Caco-2 (cell line): ENCODE measurements at regions of chr11 and their contacts with region 1.

Region 1: DNA sequence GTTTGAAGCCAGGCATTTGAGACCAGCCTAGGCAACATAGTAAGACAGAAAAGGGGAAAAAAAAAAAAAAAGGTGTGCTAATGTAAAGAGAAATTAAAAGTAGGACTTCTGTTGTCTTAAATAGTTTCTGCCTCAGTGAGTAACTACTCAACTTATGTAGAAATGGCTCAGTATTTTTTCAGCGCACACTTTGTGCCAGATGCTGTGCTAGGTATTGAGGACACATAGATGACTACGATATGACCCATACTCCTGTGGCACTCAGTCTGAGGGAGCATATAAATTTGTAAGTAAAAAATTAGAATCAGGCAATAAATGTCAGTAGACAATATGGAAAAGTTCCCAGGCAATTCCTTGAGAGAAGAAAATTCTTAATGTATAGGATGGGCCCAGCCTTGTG is 93.9 kb downstream of the YAP1 start:
- DNase-seq: no peak
- H3K4me3 ChIP-seq: no peak overlapping the region
- H3K4me3 Mint-ChIP-seq: no peak overlapping the region
- H3K27ac Mint-ChIP-seq: peak overlapping the region; percentile 12
- H3K4me1 ChIP-seq: peaks cover 8% of the 10 kb centered on the region; the same call in 1 of the 2 replicates
- H3K4me1 Mint-ChIP-seq: peaks cover 35% of the 10 kb centered on the region
- H3K27me3 ChIP-seq: no peaks in the 10 kb centered on the region
- H3K27me3 Mint-ChIP-seq: no peaks in the 10 kb centered on the region
- CTCF ChIP-seq: no peak

Region 2: GRCh38 chr11:102171101-102171500 is 33.1 kb before region 1 on chr11:
- CTCF ChIA-PET with region 1: no interaction called
- POLR2A ChIA-PET with region 1: no interaction called
- intact Hi-C with region 1: no loop called
- DNase-seq: no peak
- H3K4me3 ChIP-seq: no peak overlapping the region
- H3K4me3 Mint-ChIP-seq: no peak overlapping the region
- H3K27ac Mint-ChIP-seq: no peak overlapping the region
- H3K4me1 ChIP-seq: peaks cover 17% of the 10 kb centered on the region
- H3K4me1 Mint-ChIP-seq: peaks cover 24% of the 10 kb centered on the region
- H3K27me3 ChIP-seq: no peaks in the 10 kb centered on the region
- H3K27me3 Mint-ChIP-seq: no peaks in the 10 kb centered on the region
- CTCF ChIP-seq: no peak

Region 3: DNA sequence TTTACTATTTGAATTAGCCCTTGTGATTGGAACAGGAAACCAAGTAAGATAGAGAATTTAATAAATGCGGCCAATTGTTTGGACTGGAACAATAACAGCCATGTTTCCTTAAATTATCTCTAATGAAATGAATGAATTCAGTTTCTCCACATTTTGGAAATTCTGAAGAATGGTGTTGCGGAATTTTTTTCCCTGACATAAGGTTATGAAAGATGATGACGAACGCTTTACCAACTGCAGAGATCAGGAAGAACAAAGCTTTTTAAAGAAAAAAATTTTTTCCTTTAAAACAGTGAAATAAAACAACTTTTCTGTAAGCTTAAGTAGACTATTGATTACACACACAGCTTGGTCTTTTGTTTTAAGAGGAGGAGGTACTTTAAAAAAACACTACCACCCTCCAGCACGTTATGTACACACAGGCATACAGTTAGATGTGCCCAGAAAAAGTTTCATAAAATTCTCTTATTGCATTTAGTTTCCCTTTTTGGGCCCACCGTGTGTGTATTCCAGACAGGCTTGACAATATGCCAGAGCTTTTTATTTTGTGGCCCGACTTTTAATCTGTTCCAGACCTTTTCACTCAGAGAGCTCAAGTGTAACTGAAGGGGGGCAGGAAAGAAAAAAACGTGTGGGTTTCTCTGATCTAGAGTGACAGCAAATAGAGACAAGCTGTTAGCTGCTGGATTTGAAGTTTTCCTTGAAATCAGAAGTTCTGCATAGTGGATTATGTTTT is 16.6 kb before region 1 on chr11:
- CTCF ChIA-PET with region 1: no interaction called
- POLR2A ChIA-PET with region 1: no interaction called
- intact Hi-C with region 1: no loop called
- DNase-seq: no peak
- H3K4me3 ChIP-seq: no peak overlapping the region
- H3K4me3 Mint-ChIP-seq: peak overlapping the region; percentile 64
- H3K27ac Mint-ChIP-seq: peak overlapping the region; percentile 54
- H3K4me1 ChIP-seq: peaks cover 83% of the 10 kb centered on the region
- H3K4me1 Mint-ChIP-seq: peaks cover 58% of the 10 kb centered on the region
- H3K27me3 ChIP-seq: no peaks in the 10 kb centered on the region
- H3K27me3 Mint-ChIP-seq: no peaks in the 10 kb centered on the region
- CTCF ChIP-seq: no peak

Region 4: GRCh38 chr11:102216433-102217075 is 12.4 kb after region 1 on chr11:
- CTCF ChIA-PET with region 1: no interaction called
- POLR2A ChIA-PET with region 1: no interaction called
- intact Hi-C with region 1: loop called (anchors 1 kb)
- DNase-seq: no peak
- H3K4me3 ChIP-seq: no peak overlapping the region
- H3K4me3 Mint-ChIP-seq: no peak overlapping the region
- H3K27ac Mint-ChIP-seq: no peak overlapping the region
- H3K4me1 ChIP-seq: no peaks in the 10 kb centered on the region
- H3K4me1 Mint-ChIP-seq: peaks cover 22% of the 10 kb centered on the region
- H3K27me3 ChIP-seq: no peaks in the 10 kb centered on the region
- H3K27me3 Mint-ChIP-seq: no peaks in the 10 kb centered on the region
- CTCF ChIP-seq: no peak

Region 5: GRCh38 chr11:102451681-102452460 is 247.7 kb after region 1 on chr11:
- CTCF ChIA-PET with region 1: no interaction called
- POLR2A ChIA-PET with region 1: no interaction called
- intact Hi-C with region 1: no loop called
- DNase-seq: peak; percentile 81 to 87
- H3K4me3 ChIP-seq: peak overlapping the region; percentile 90
- H3K4me3 Mint-ChIP-seq: peak overlapping the region; percentile 99
- H3K27ac Mint-ChIP-seq: peak overlapping the region; percentile 98
- H3K4me1 ChIP-seq: peaks cover 55% of the 10 kb centered on the region
- H3K4me1 Mint-ChIP-seq: peaks cover 52% of the 10 kb centered on the region
- H3K27me3 ChIP-seq: no peaks in the 10 kb centered on the region
- H3K27me3 Mint-ChIP-seq: no peaks in the 10 kb centered on the region
- CTCF ChIP-seq: peak; percentile 24 to 51